H1 (cell line): ENCODE measurements at regions of chr11 and their contacts with region 1.

Region 1: DNA sequence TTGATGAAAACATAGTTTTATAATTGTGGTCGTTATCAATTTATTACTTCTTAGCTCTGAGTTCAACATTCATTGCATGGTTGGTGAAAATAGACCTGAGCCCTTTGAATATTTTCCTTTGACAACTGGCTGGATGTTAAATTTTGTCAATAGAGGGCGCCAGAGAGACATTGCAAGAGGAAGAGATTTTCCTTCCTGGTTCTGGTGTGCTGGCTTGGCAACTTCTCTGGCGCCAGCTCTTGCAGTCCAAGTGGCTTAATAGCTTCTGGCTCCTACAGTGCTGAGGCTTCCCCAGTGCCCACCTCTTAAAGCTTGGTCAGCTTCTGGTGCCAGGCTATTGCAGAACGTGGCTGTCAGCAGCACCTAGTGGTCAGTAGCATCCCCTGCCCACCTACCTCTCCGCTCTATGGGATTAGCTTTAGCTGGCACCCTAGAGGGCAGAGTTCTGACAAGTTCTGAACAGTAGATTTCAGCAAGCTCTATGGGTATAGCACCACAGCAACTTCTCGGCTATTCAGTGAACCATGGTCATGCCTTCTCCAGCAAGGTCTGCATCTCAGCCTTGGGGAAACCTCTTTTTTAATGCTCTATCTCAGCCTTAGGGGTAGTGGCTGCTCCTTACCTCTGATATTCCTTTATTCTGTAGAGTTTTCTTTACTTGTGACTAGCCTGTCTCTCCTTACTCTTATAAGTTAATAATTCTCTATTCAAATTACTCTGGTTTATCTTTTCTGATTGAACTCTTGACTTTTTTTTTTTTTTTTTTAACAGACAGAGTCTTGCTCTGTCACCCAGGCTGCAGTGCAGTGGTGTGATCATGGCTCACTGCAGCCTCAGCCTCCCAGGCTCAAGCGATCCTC is 59.4 kb downstream of the ACER3 start:
- DNase-seq: peak in 1 of 2 experiments; percentile 71
- H3K4me3 ChIP-seq: no peak overlapping the region
- H3K27ac ChIP-seq: no peak overlapping the region
- H3K4me1 ChIP-seq: peaks cover 0 to 2% (median 0%) of the 10 kb centered on the region in 4 experiments; a peak in 2 of 7 replicates
- H3K27me3 ChIP-seq: no peaks in the 10 kb centered on the region
- CTCF ChIP-seq: peak; percentile 33 to 79 (median 75)
- EP300 ChIP-seq: no peak
- POLR2A ChIP-seq: no peak
- RAD21 ChIP-seq: peak; percentile 64 to 73

Region 2: DNA sequence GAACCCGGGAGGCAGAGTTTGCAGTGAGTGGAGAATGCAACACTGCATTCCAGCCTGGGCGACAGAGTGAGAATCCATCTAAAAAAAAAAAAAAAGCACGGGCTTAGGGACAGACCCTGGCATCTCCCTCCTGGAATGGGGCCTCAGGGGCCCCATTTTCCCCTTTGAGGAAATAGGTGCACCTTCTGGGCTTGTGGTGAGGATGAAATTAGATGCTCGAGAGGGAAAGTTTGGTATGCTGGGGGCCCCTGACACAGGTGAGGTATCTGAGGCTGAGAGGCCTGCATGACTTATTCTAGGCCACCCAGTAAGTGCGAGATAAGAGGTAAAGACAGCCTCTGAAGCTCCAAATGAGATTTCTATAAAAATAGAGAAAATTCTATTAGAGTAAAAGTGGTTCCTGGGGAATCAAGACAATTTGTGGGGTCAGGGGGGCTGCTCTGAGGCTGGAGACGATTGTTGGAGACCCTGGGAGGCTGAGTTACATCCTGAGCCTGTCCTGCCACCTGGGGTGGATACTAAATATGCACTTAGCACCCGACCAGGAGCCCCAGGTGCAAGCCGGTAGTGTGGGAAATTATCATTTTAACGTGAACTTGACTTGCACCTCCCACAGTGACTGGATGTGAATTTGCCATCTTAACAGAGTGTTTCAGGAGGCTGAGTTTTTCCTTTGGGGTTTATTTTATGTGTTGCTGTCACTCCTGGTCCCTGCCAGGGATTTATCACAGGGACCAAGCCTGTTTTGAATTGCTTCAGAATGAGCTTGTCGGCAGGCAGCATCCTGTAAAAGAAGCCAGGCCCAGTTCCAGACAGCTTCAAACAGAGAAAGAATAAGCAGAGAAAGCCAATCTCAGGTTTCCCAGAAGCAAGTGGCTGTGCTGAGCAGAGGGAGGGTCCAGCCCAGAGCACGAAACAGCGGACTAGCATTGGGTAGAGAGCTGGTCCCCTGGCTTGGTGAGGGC is 185.4 kb before region 1 on chr11:
- CTCF ChIA-PET with region 1: interaction called, 92 read pairs
- POLR2A ChIA-PET with region 1: no interaction called
- DNase-seq: no peak
- H3K4me3 ChIP-seq: no peak overlapping the region
- H3K27ac ChIP-seq: no peak overlapping the region
- H3K4me1 ChIP-seq: peaks cover 8 to 17% (median 13%) of the 10 kb centered on the region in 4 experiments
- H3K27me3 ChIP-seq: no peaks in the 10 kb centered on the region
- CTCF ChIP-seq: no peak
- EP300 ChIP-seq: no peak
- POLR2A ChIP-seq: no peak
- RAD21 ChIP-seq: no peak

Region 3: DNA sequence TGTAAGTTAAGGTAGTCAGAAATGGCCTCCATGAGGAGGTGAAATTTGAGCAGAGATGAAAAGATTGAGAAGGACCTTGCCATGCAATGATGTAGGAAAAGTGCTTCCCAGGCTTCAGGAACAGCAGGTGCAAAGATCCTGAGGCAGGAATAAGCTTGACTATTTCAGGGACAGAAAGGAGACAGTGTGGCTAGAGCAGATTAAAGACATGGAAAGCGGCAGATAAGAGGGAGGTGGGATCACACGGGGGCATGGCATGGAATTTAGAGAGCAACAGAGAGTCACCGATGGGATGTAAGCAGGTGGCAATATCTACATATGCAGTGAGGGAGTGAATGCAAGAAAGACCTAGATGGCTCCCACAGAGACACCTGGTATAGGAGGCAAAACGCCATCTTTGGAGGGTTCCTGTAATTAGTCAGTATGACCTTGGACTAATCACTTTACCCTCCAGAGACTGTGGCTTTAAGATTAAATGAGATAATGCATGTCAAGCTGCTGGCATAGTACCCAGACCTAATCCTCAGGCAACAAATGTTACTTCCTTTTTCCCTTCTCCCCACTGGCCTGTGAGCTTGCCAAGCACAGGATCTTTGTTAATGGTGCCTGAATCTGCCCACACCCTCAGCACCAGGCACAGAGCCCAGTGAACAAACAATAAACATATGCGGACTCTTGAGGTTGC is 84.0 kb before region 1 on chr11:
- CTCF ChIA-PET with region 1: interaction called, 13 read pairs
- POLR2A ChIA-PET with region 1: no interaction called
- DNase-seq: no peak
- H3K4me3 ChIP-seq: no peak overlapping the region
- H3K27ac ChIP-seq: no peak overlapping the region
- H3K4me1 ChIP-seq: 0 out of 7 replicates have a peak, but pooled peaks cover 0 to 4% (median 0%) of the 10 kb centered on the region in 4 experiments
- H3K27me3 ChIP-seq: no peaks in the 10 kb centered on the region
- CTCF ChIP-seq: no peak
- EP300 ChIP-seq: no peak
- POLR2A ChIP-seq: no peak
- RAD21 ChIP-seq: no peak

Region 4: DNA sequence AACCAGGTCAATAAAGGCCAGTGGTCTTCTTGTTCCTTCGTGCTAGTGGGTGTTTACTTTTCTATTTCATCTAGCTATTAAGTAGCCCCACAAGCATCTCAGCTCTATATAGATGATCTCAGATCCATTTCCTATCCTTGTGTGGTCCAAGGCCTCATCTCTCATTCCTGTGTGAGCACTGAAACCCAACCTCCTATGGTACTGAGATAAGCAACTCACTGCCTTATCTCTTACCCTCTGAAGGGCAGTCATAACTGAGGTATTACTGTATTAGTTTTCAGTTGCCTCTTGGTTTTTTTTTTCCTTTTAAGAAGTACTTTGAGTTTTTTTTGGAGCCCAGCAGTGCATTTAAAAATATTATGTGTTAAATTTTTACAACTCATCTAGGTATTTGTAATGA is 31.1 kb before region 1 on chr11:
- CTCF ChIA-PET with region 1: interaction called, 25 read pairs
- POLR2A ChIA-PET with region 1: no interaction called
- DNase-seq: no peak
- H3K4me3 ChIP-seq: no peak overlapping the region
- H3K27ac ChIP-seq: no peak overlapping the region
- H3K4me1 ChIP-seq: peaks cover 0 to 4% (median 0%) of the 10 kb centered on the region in 4 experiments; a peak in 1 of 7 replicates
- H3K27me3 ChIP-seq: no peaks in the 10 kb centered on the region
- CTCF ChIP-seq: no peak
- EP300 ChIP-seq: no peak
- POLR2A ChIP-seq: no peak
- RAD21 ChIP-seq: no peak

Region 5: DNA sequence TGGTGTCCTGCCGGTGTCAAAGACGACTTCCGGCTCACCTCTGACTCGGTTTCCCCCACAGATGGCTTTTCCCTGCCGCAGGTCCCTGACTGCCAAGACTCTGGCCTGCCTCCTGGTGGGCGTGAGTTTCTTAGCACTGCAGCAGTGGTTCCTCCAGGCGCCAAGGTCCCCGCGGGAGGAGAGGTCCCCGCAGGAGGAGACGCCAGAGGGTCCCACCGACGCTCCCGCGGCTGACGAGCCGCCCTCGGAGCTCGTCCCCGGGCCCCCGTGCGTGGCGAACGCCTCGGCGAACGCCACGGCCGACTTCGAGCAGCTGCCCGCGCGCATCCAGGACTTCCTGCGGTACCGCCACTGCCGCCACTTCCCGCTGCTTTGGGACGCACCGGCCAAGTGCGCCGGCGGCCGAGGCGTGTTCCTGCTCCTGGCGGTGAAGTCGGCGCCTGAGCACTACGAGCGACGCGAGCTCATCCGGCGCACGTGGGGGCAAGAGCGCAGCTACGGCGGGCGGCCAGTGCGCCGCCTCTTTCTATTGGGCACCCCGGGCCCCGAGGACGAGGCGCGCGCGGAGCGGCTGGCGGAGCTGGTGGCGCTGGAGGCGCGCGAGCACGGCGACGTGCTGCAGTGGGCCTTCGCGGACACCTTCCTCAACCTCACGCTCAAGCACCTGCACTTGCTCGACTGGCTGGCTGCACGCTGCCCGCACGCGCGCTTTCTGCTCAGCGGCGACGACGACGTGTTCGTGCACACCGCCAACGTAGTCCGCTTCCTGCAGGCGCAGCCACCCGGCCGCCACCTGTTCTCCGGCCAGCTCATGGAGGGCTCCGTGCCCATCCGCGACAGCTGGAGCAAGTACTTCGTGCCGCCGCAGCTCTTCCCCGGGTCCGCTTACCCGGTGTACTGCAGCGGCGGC is 119.6 kb after region 1 on chr11:
- CTCF ChIA-PET with region 1: interaction called, 40 read pairs
- POLR2A ChIA-PET with region 1: interaction called, 3 read pairs
- DNase-seq: peak in 1 of 2 experiments; percentile 86
- H3K4me3 ChIP-seq: peak overlapping the region; percentile 9 to 51 (median 17); a peak in 5 of 8 replicates
- H3K27ac ChIP-seq: no peak overlapping the region
- H3K4me1 ChIP-seq: peaks cover 0 to 9% (median 4%) of the 10 kb centered on the region in 4 experiments; a peak in 5 of 7 replicates
- H3K27me3 ChIP-seq: peaks cover 14 to 34% (median 30%) of the 10 kb centered on the region in 4 experiments
- CTCF ChIP-seq: peak; percentile 71 to 79 (median 72)
- EP300 ChIP-seq: no peak
- POLR2A ChIP-seq: no peak
- RAD21 ChIP-seq: peak; percentile 54 to 70; a peak in 3 of 4 replicates

Region 6: DNA sequence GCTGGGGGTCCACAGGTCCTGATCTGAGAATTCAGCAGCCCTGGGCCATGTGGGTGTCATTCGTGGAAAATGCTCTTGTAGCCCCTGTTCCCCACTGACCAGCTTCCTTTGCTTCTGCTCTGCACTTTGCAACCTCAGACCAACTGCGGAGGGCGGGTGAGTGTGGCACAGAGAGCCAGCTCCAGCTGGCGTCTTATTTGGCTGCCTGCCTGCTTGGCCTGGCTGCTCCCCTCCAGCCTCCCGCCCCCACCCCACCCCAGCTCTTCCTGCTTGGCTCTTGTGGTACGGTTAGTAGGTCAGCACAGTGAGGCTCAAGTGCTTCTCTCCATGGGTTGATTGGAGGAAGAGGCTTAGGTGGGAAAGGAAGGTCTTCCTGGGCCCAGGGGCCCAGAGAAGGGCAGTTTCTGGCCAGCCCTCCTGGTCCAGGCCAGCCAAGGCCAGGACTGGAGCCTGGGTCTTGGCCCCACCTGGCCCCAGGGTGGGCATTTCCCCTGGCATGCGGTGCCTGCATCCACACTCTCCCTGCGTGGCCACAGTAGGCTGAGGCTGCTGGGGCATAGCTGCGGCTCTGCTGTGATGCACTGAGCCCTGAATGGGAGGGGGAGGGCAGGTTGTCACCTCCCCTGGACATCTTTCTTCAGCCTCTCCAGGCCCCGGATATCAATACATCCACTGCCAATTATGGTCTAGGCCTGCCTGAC is 234.4 kb after region 1 on chr11:
- CTCF ChIA-PET with region 1: no interaction called
- POLR2A ChIA-PET with region 1: no interaction called
- DNase-seq: no peak
- H3K4me3 ChIP-seq: no peak overlapping the region
- H3K27ac ChIP-seq: no peak overlapping the region
- H3K4me1 ChIP-seq: peaks cover 0 to 4% (median 0%) of the 10 kb centered on the region in 4 experiments; a peak in 1 of 7 replicates
- H3K27me3 ChIP-seq: no peaks in the 10 kb centered on the region
- CTCF ChIP-seq: no peak
- EP300 ChIP-seq: no peak
- POLR2A ChIP-seq: no peak
- RAD21 ChIP-seq: no peak